ENCODE measurements at regions of chr17 and their contacts with region 1.

Region 1: GRCh38 chr17:34361478-34362061 is 1.5 kb downstream of the CCL1 start:
- DNase-seq: peak; percentile 48
- H3K4me3 ChIP-seq: no peak overlapping the region
- H3K27ac ChIP-seq: no peak overlapping the region
- H3K4me1 ChIP-seq: no peaks in the 10 kb centered on the region
- H3K27me3 ChIP-seq: peaks cover 2% of the 10 kb centered on the region
- CTCF ChIP-seq: peak; percentile 95 to 100 (median 100)

Region 2: GRCh38 chr17:34199932-34200534 is 161.5 kb before region 1 on chr17:
- dilution Hi-C with region 1: loop called (anchors 25 kb)
- DNase-seq: peak; percentile 61
- H3K4me3 ChIP-seq: no peak overlapping the region
- H3K27ac ChIP-seq: no peak overlapping the region
- H3K4me1 ChIP-seq: no peaks in the 10 kb centered on the region
- H3K27me3 ChIP-seq: peaks cover 9% of the 10 kb centered on the region
- CTCF ChIP-seq: peak; percentile 100